ENCODE measurements at regions of chr17 and their contacts with region 1.

Region 1: GRCh38 chr17:61048376-61049106 is 351.1 kb upstream of the TBX2 start:
- DNase-seq: no peak
- H3K4me3 ChIP-seq: no peak overlapping the region
- H3K27ac ChIP-seq: no peak overlapping the region
- H3K4me1 ChIP-seq: no peaks in the 10 kb centered on the region
- H3K27me3 ChIP-seq: no peaks in the 10 kb centered on the region
- CTCF ChIP-seq: no peak

Region 2: GRCh38 chr17:61247439-61247838 is 198.9 kb after region 1 on chr17:
- CTCF ChIA-PET with region 1: no interaction called
- POLR2A ChIA-PET with region 1: no interaction called
- intact Hi-C with region 1: no loop called
- DNase-seq: no peak
- H3K4me3 ChIP-seq: no peak overlapping the region
- H3K27ac ChIP-seq: no peak overlapping the region
- H3K4me1 ChIP-seq: no peaks in the 10 kb centered on the region
- H3K27me3 ChIP-seq: no peaks in the 10 kb centered on the region
- CTCF ChIP-seq: no peak

Region 3: DNA sequence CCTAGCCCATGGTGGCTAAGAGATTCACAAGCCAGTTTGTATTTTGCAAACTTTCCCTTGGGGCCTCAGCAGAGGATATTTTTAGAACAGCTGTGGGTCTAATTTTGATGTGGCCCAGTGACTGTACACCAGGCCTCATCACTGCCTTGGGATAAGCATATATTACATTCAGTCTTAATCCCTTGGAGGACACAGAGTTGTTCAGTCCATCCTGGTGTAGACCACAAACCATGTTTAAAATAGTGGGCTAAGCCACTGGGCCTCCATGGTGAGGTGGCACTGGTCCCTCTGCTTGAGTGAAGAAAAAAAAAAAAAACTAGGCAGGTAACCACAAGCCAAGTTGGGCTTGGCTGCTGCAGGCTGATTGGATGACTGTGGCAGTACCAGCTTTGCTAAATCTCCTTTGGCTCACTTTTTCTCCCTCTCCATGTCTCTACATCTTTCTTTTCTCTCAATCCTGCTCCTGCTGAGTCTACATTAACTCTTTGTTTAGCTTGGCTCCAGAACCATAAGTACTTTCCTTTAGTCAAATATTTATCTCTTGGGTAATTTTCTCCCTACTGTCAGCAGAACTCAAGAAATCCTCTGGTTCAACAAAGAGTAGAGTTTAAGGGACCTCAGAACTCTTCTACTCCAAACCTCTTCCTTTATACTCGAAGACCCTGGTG is 231.1 kb after region 1 on chr17:
- CTCF ChIA-PET with region 1: interaction called, 3 read pairs
- POLR2A ChIA-PET with region 1: interaction called, 24 read pairs
- intact Hi-C with region 1: no loop called
- DNase-seq: no peak
- H3K4me3 ChIP-seq: no peak overlapping the region
- H3K27ac ChIP-seq: no peak overlapping the region
- H3K4me1 ChIP-seq: no peaks in the 10 kb centered on the region
- H3K27me3 ChIP-seq: no peaks in the 10 kb centered on the region
- CTCF ChIP-seq: no peak

Measured in PC-9 (cell line).